ENCODE measurements at regions of chr17 and their contacts with region 1.

Region 1: GRCh38 chr17:4583782-4584100 is 588 bp upstream of the SMTNL2 start:
- DNase-seq: peak in 2 of 5 donors; percentile 63 to 65
- ATAC-seq: peak; percentile 28 to 72 (median 65)
- H3K4me3 ChIP-seq: peak overlapping the region; percentile 53 to 72 (median 62)
- H3K27ac ChIP-seq: peak overlapping the region; percentile 56 to 86 (median 74)
- H3K4me1 ChIP-seq: peaks cover 0 to 68% (median 22%) of the 10 kb centered on the region in 12 donors
- H3K27me3 ChIP-seq: peaks cover 0 to 30% (median 10%) of the 10 kb centered on the region in 9 donors
- CTCF ChIP-seq: peak in 11 of 12 donors; percentile 16 to 55 (median 34)
- POLR2A ChIP-seq: no peak

Region 2: GRCh38 chr17:4599505-4600306 is 16.0 kb after region 1 on chr17:
- intact Hi-C with region 1: loop called in 1 of 10 experiments (anchors 2 kb)
- DNase-seq: peak in 3 of 5 donors; percentile 71 to 79 (median 79)
- ATAC-seq: peak; percentile 25 to 47 (median 39)
- H3K4me3 ChIP-seq: no peak overlapping the region
- H3K27ac ChIP-seq: peak overlapping the region; percentile 77 to 94 (median 86)
- H3K4me1 ChIP-seq: peaks cover 0 to 52% (median 28%) of the 10 kb centered on the region in 12 donors
- H3K27me3 ChIP-seq: no peaks in the 10 kb centered on the region
- CTCF ChIP-seq: no peak
- POLR2A ChIP-seq: no peak

Region 3: GRCh38 chr17:4625181-4625617 is 41.5 kb after region 1 on chr17:
- intact Hi-C with region 1: loop called in 1 of 10 experiments (anchors 2 kb)
- DNase-seq: no peak
- ATAC-seq: peak; percentile 48 to 69 (median 60)
- H3K4me3 ChIP-seq: no peak overlapping the region
- H3K27ac ChIP-seq: peak overlapping the region in 3 of 12 donors; percentile 3 to 46 (median 37)
- H3K4me1 ChIP-seq: peaks cover 0 to 13% (median 8%) of the 10 kb centered on the region in 12 donors
- H3K27me3 ChIP-seq: peaks cover 0 to 2% (median 0%) of the 10 kb centered on the region in 9 donors
- CTCF ChIP-seq: no peak
- POLR2A ChIP-seq: no peak

Region 4: GRCh38 chr17:4635823-4636375 is 52.2 kb after region 1 on chr17:
- intact Hi-C with region 1: no loop called
- DNase-seq: peak in 2 of 5 donors; percentile 24 to 45
- ATAC-seq: peak in 3 of 4 donors; percentile 38 to 56 (median 55)
- H3K4me3 ChIP-seq: no peak overlapping the region
- H3K27ac ChIP-seq: no peak overlapping the region
- H3K4me1 ChIP-seq: peaks cover 0 to 11% (median 0%) of the 10 kb centered on the region in 12 donors
- H3K27me3 ChIP-seq: peaks cover 5 to 52% (median 24%) of the 10 kb centered on the region in 9 donors
- CTCF ChIP-seq: no peak
- POLR2A ChIP-seq: no peak